ENCODE measurements at regions of chr3 and their contacts with region 1.

Region 1: DNA sequence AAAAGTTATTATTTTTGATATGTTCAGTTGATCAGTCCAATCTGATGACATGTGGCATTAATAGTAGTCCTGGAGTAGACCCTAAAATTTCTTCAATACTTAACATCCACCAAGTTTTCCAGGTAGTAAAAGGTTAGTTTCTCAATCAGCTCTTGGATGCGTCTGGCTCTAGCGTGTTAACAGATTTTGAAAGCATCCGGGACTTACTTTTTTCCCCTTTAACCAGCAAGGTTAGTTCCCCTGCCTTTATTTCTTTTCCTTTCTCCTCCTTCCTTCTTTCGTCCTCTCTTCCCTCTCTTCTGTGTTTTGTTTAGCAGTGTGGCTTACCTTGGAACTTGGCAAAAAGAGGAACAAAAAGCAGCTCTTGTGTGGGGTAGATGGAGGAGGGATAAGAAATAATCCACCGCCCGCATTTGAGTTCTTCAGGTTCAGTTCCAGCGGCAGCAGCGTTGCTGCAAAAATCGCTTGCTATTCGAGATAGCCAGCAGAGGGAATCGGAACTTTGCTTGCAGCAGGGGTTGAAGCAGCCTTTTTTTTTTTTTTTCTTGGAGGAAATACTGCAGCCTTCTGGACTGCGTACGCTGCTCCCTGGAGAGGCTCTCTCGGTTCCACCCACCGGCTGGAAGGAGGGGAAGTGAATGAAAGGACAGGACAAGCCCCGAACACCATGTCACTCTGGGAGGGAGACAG is at the start of gene RBMS3:
- DNase-seq: peak; percentile 97
- ATAC-seq: peak; percentile 82
- H3K4me3 ChIP-seq: peak within 1 kb of the TSS; percentile 91
- H3K27ac ChIP-seq: peak within 1 kb of the TSS; percentile 95
- H3K4me1 ChIP-seq: peaks cover 7% of the 10 kb centered on the region
- H3K27me3 ChIP-seq: no peaks in the 10 kb centered on the region
- CTCF ChIP-seq: peak; percentile 65
- POLR2A ChIP-seq: peak; percentile 79; the same call in 1 of the 2 replicates
- RAD21 ChIP-seq: peak; percentile 73
- total RNA-seq, gene RBMS3: 110 and 127 TPM in 2 replicates

Region 2: GRCh38 chr3:28667646-28668621 is 612.6 kb before region 1 on chr3:
- CTCF ChIA-PET with region 1: no interaction called
- POLR2A ChIA-PET with region 1: no interaction called
- dilution Hi-C with region 1: no loop called
- in situ Hi-C with region 1: no loop called
- intact Hi-C with region 1: loop called (anchors 1 kb)
- DNase-seq: peak; percentile 52
- ATAC-seq: peak; percentile 85
- H3K4me3 ChIP-seq: no peak overlapping the region
- H3K27ac ChIP-seq: no peak overlapping the region
- H3K4me1 ChIP-seq: no peaks in the 10 kb centered on the region
- H3K27me3 ChIP-seq: peaks cover 2% of the 10 kb centered on the region; the same call in 1 of the 2 replicates
- CTCF ChIP-seq: peak; percentile 64
- POLR2A ChIP-seq: no peak
- RAD21 ChIP-seq: peak; percentile 62

Region 3: DNA sequence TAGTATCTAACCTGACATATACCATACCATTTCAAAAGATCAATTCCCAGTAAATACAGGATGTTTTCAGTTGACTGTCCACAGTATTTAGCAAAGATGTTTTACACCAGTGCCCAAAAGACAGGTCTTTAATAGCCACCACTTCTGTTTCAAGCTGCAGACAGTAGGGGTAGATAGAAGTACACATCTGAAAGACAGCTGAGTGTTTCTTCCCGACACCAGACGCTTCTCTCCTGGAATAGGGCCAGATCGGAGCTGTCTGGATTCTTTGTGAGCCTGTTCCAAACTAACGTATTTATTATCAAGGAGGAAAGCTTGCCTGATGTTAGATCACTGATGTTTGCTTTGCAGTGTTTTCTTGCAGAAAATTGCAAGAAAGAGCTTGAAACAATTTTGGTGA is 135.7 kb before region 1 on chr3:
- CTCF ChIA-PET with region 1: no interaction called
- POLR2A ChIA-PET with region 1: no interaction called
- dilution Hi-C with region 1: no loop called
- in situ Hi-C with region 1: no loop called
- intact Hi-C with region 1: loop called (anchors 2 kb)
- DNase-seq: peak; percentile 65
- ATAC-seq: peak; percentile 52
- H3K4me3 ChIP-seq: no peak overlapping the region
- H3K27ac ChIP-seq: no peak overlapping the region
- H3K4me1 ChIP-seq: peaks cover 10% of the 10 kb centered on the region
- H3K27me3 ChIP-seq: no peaks in the 10 kb centered on the region
- CTCF ChIP-seq: peak; percentile 43
- POLR2A ChIP-seq: no peak
- RAD21 ChIP-seq: peak; percentile 49

Region 4: GRCh38 chr3:29465836-29466235 is 185.3 kb after region 1 on chr3:
- CTCF ChIA-PET with region 1: no interaction called
- POLR2A ChIA-PET with region 1: no interaction called
- dilution Hi-C with region 1: no loop called
- in situ Hi-C with region 1: no loop called
- intact Hi-C with region 1: loop called (anchors 10 kb)
- DNase-seq: peak; percentile 82
- ATAC-seq: peak; percentile 90
- H3K4me3 ChIP-seq: no peak overlapping the region
- H3K27ac ChIP-seq: peak overlapping the region; percentile 49; the same call in 1 of the 2 replicates
- H3K4me1 ChIP-seq: peaks cover 4% of the 10 kb centered on the region; the same call in 1 of the 2 replicates
- H3K27me3 ChIP-seq: no peaks in the 10 kb centered on the region
- CTCF ChIP-seq: no peak
- POLR2A ChIP-seq: no peak
- RAD21 ChIP-seq: no peak

Region 5: DNA sequence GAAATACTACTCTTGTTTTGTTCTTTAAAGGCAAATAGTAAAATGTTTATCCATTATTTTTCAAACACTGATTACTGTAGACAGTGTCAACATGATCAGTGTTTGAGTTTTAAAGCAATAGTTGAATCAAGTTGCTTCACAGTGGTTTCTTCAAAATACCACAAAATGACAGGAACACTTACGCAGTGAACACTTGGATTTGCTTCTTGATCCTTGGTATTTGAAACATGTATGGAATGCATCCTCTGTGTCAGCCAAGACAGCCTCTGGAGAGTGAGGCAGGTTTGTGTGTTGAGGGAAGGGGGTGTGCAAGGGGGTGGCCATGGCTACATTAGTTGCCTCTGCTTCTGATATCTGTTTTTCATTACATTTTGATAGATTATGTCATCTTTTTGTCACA is 413.3 kb after region 1 on chr3:
- CTCF ChIA-PET with region 1: no interaction called
- POLR2A ChIA-PET with region 1: no interaction called
- dilution Hi-C with region 1: no loop called
- in situ Hi-C with region 1: no loop called
- intact Hi-C with region 1: loop called (anchors 2 kb)
- DNase-seq: peak; percentile 87
- ATAC-seq: peak; percentile 73
- H3K4me3 ChIP-seq: no peak overlapping the region
- H3K27ac ChIP-seq: peak overlapping the region; percentile 63; the same call in 1 of the 2 replicates
- H3K4me1 ChIP-seq: peaks cover 12% of the 10 kb centered on the region
- H3K27me3 ChIP-seq: no peaks in the 10 kb centered on the region
- CTCF ChIP-seq: no peak
- POLR2A ChIP-seq: no peak
- RAD21 ChIP-seq: no peak

Region 6: DNA sequence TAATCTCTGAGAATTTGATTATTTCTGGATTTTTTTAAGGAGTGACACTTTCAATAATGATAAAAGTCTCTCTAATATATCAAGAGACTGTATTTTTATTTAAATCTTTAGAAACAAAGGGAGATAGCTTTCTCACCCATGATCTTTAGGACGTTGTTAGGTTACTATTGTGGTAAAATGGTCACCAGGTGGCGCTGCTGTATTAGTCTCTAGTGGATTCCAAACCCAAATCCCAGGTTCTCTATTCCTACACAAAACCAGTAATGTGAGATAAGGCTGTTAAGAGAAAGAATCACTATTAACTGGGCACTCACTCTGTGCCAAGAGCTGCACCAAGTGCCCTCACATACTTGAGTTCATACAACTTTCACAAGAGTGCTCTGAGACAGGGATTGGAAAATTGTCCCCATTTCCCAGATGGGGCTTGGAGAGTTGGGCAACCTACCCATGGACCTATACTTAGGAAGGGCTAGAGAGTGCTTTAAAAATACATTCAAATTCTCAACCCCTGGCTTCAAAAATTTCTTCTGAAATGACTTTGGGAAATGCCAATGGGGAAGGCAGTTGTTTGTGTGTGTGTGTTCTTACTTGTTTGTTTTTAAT is 732.5 kb after region 1 on chr3:
- CTCF ChIA-PET with region 1: no interaction called
- POLR2A ChIA-PET with region 1: no interaction called
- dilution Hi-C with region 1: no loop called
- in situ Hi-C with region 1: no loop called
- intact Hi-C with region 1: loop called (anchors 5 kb)
- DNase-seq: peak; percentile 70
- ATAC-seq: peak; percentile 72
- H3K4me3 ChIP-seq: no peak overlapping the region
- H3K27ac ChIP-seq: no peak overlapping the region
- H3K4me1 ChIP-seq: no peaks in the 10 kb centered on the region
- H3K27me3 ChIP-seq: no peaks in the 10 kb centered on the region
- CTCF ChIP-seq: peak; percentile 65
- POLR2A ChIP-seq: no peak
- RAD21 ChIP-seq: peak; percentile 64